ENCODE measurements at regions of chrX and their contacts with region 1.

Region 1: GRCh38 chrX:153554519-153555167 is 37.2 kb downstream of the ATP2B3 start:
- H3K4me3 ChIP-seq: no peak overlapping the region
- H3K27ac ChIP-seq: no peak overlapping the region
- H3K4me1 ChIP-seq: no peaks in the 10 kb centered on the region
- CTCF ChIP-seq: peak; percentile 78

Region 2: DNA sequence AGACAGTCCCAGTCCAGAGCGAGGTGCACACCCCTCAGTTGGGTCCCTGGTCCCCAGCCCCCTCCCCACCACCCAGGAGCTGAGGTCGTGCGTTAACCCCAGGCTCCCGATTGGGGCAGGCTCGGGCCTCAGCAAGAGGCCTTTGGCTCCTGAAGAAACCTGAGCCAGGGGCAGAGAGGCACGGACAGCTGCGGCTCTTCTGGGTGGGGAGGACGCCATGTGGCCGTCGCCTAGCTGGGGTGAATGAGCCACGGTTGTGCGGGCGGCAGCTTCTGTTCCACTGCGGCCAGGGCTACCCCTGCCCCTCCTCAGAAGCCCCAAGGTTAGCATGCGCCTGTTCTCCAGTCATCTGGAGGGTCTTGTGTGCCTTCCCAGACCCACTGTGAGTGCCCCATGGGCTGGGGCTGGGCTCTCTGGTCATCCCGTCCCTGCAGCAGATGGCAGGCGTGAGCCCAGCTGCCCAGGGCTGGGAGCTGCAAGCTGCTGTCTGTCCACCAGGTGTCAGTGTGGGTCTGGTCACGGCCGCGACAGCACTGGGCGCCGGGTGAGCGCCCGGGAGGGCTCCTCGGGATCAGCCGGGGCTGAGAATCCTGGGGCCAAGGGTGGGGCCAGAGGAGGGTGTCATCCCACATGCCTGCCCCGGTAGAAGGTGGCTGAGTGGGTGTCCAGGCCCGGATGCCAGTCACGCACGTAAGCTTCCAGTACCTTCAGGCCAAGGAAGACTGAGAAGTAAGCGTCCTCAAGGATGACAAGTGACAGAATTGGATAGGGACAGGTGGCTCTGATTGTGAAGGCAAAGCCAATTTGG is 15.3 kb before region 1 on chrX:
- CTCF ChIA-PET with region 1: interaction called, 14 read pairs
- POLR2A ChIA-PET with region 1: no interaction called
- H3K4me3 ChIP-seq: no peak overlapping the region
- H3K27ac ChIP-seq: no peak overlapping the region
- H3K4me1 ChIP-seq: no peaks in the 10 kb centered on the region
- CTCF ChIP-seq: peak; percentile 99

Region 3: GRCh38 chrX:153635788-153636622 is 81.4 kb after region 1 on chrX:
- CTCF ChIA-PET with region 1: interaction called, 11 read pairs
- POLR2A ChIA-PET with region 1: no interaction called
- H3K4me3 ChIP-seq: no peak overlapping the region
- H3K27ac ChIP-seq: no peak overlapping the region
- H3K4me1 ChIP-seq: no peaks in the 10 kb centered on the region
- CTCF ChIP-seq: peak; percentile 73